Activated naive CD4-positive, alpha-beta T cell treated with anti-CD3 and anti-CD28 coated beads for 36 hours (primary cell): ENCODE measurements at regions of chr3 and their contacts with region 1.

Region 1: GRCh38 chr3:138923531-138923994 is 23.4 kb downstream of the FOXL2 start:
- DNase-seq: peak; percentile 94
- H3K4me3 Mint-ChIP-seq: no peak overlapping the region
- H3K27ac Mint-ChIP-seq: no peak overlapping the region
- H3K4me1 Mint-ChIP-seq: no peaks in the 10 kb centered on the region
- H3K27me3 Mint-ChIP-seq: peaks cover 2% of the 10 kb centered on the region

Region 2: DNA sequence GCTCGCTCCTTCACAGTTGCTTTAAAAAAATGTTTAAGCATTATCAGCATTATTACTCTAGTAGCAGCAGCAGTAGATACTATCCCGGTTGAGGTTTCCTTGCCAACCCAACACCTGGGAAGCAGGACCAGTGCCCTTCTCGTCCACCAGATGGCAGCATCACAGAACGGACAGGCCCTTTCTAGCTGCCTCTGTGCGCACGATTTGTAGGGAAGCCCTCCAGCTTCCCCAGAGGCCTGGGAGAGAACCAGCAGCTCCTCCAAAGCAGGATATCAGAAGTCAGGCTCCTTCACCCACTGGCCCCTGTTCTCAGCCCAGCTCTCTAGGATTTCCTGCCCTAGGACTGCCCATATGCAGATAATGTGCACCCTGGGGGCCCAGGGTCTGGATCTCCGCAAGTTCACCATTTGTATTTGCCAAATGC is 506.0 kb before region 1 on chr3:
- CTCF ChIA-PET with region 1: interaction called, 29 read pairs
- intact Hi-C with region 1: loop called (anchors 1 kb)
- DNase-seq: peak; percentile 86
- H3K4me3 Mint-ChIP-seq: no peak overlapping the region
- H3K27ac Mint-ChIP-seq: no peak overlapping the region
- H3K4me1 Mint-ChIP-seq: peaks cover 4% of the 10 kb centered on the region
- H3K27me3 Mint-ChIP-seq: peaks cover 6% of the 10 kb centered on the region

Region 3: DNA sequence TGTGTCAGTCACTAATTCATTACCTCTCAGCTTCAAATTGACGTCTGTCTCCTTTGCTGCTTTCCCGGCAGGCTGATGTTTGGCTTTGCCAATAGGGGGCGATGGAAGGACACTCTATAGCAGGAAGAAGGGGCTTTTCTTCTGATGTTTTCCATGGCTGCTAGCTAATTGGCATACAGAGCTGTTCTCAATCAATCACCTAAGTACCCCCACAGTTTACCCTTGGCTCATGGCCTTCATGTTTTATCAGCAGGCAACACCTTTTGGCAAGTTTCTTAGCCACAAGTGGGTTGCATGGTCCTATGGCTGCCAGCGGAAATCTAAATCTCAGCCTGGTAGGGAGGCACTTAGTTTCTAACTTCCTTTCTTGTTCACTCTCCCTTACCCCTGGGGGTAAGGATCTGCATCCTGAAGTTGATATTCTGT is 444.1 kb before region 1 on chr3:
- CTCF ChIA-PET with region 1: interaction called, 5 read pairs
- intact Hi-C with region 1: loop called (anchors 1 kb)
- DNase-seq: peak; percentile 65
- H3K4me3 Mint-ChIP-seq: no peak overlapping the region
- H3K27ac Mint-ChIP-seq: no peak overlapping the region
- H3K4me1 Mint-ChIP-seq: no peaks in the 10 kb centered on the region
- H3K27me3 Mint-ChIP-seq: no peaks in the 10 kb centered on the region

Region 4: GRCh38 chr3:138625707-138626365 is 297.7 kb before region 1 on chr3:
- CTCF ChIA-PET with region 1: interaction called, 10 read pairs
- intact Hi-C with region 1: no loop called
- DNase-seq: no peak
- H3K4me3 Mint-ChIP-seq: no peak overlapping the region
- H3K27ac Mint-ChIP-seq: no peak overlapping the region
- H3K4me1 Mint-ChIP-seq: peaks cover 7% of the 10 kb centered on the region
- H3K27me3 Mint-ChIP-seq: no peaks in the 10 kb centered on the region

Region 5: GRCh38 chr3:138694287-138695007 is 229.1 kb before region 1 on chr3:
- CTCF ChIA-PET with region 1: interaction called, 86 read pairs
- intact Hi-C with region 1: no loop called
- DNase-seq: no peak
- H3K4me3 Mint-ChIP-seq: no peak overlapping the region
- H3K27ac Mint-ChIP-seq: no peak overlapping the region
- H3K4me1 Mint-ChIP-seq: peaks cover 3% of the 10 kb centered on the region
- H3K27me3 Mint-ChIP-seq: no peaks in the 10 kb centered on the region

Region 6: GRCh38 chr3:138909904-138910303 is 13.7 kb before region 1 on chr3:
- CTCF ChIA-PET with region 1: interaction called, 76 read pairs
- intact Hi-C with region 1: no loop called
- DNase-seq: no peak
- H3K4me3 Mint-ChIP-seq: no peak overlapping the region
- H3K27ac Mint-ChIP-seq: no peak overlapping the region
- H3K4me1 Mint-ChIP-seq: peaks cover 1% of the 10 kb centered on the region
- H3K27me3 Mint-ChIP-seq: no peaks in the 10 kb centered on the region

Region 7: DNA sequence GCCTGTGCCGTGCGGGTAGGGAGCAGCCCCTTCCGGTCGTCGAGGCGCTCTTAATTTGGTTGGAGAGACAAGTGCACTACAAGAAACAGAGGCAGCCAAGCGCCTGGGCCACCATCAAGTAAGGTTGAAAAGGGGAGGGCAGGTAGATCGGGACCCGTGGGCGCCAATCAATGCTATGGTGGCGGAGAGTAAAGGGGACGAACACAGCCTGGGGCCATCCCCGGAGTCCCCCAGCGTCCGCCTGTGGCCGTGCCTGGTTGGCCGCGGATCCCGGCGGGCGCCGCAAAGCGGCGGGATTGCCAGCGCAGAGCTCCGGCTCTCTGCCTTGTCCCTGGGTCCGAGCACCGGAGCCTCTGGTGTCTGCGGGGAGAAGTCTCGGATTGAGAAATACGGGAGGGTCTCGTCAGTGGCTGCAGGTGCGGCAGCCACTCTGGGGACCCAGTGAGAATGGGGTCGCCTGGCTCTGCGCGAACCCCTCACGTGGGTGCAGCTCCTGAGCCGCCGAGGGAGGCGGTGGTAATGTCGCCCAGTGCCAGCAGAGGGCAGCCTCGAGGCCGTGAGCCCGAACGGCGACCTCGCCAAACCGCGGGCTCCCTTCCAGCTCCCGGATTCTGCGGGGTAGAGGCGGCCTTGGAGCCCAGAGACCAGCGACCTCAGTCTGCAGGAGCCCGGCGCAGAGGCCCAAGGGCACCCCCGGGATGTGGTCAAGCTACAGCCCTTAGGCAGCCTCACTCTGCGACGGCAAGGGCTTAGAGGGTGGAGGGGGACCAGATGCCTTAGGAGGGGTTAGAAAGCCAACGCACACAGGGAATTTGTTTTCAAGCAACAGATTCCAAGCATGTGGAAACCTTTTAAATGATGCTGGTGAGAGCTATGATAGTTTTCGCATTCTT is 12.5 kb after region 1 on chr3:
- CTCF ChIA-PET with region 1: interaction called, 113 read pairs
- intact Hi-C with region 1: no loop called
- DNase-seq: peak; percentile 78
- H3K4me3 Mint-ChIP-seq: peak overlapping the region; percentile 71
- H3K27ac Mint-ChIP-seq: no peak overlapping the region
- H3K4me1 Mint-ChIP-seq: peaks cover 34% of the 10 kb centered on the region
- H3K27me3 Mint-ChIP-seq: peaks cover 70% of the 10 kb centered on the region